Activated B cell treated with CpG ODN at 0.5 μM for 24 hours (primary cell): ENCODE measurements at regions of chr2 and their contacts with region 1.

Region 1: GRCh38 chr2:104447831-104448434 is 406.0 kb upstream of the POU3F3 start:
- DNase-seq: no peak
- ATAC-seq: no peak
- H3K4me3 Mint-ChIP-seq: no peak overlapping the region
- H3K27ac Mint-ChIP-seq: no peak overlapping the region
- H3K4me1 Mint-ChIP-seq: peaks cover 5% of the 10 kb centered on the region
- H3K27me3 Mint-ChIP-seq: no peaks in the 10 kb centered on the region
- CTCF ChIP-seq: no peak

Region 2: DNA sequence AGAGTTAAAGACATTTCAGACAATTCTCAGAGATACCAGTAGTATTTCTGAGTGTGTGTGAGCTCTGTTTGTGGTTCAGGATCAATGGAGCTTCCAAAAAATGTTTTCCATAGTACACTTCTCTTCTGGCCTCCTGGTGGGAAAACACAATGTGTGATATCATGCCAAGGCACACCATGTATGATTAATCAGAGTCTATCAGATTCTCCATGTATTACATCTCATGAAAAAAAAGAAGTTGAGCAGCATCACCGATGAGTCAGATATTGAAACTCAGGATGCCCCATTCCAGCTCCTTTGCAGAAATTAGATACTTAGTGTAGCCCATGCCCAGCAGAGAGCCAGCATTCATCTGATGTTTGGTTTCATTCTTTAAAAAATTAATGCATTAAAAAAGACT is 214.3 kb before region 1 on chr2:
- CTCF ChIA-PET with region 1: no interaction called
- POLR2A ChIA-PET with region 1: no interaction called
- intact Hi-C with region 1: no loop called
- DNase-seq: no peak
- ATAC-seq: no peak
- H3K4me3 Mint-ChIP-seq: no peak overlapping the region
- H3K27ac Mint-ChIP-seq: no peak overlapping the region
- H3K4me1 Mint-ChIP-seq: no peaks in the 10 kb centered on the region
- H3K27me3 Mint-ChIP-seq: no peaks in the 10 kb centered on the region
- CTCF ChIP-seq: no peak

Region 3: DNA sequence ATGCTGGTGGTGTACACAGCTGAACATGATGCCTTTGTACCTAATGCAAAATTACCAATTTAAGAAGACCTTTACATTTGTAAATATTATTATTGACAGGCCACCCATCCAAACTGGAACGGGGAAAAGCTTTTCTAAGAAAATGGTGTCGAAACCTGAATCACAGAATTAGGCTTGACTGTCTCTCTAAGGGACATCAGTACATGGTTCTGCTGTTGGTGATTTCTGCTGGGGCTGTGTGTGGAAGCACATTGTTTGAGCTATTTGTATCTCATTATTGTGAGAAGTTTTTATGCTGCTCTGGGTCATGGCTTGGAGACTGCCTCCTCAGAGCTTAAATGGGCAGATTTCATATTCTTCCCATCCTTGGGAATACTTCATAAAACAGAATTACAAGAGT is 14.9 kb before region 1 on chr2:
- CTCF ChIA-PET with region 1: no interaction called
- POLR2A ChIA-PET with region 1: interaction called, 11 read pairs
- intact Hi-C with region 1: no loop called
- DNase-seq: no peak
- ATAC-seq: no peak
- H3K4me3 Mint-ChIP-seq: no peak overlapping the region
- H3K27ac Mint-ChIP-seq: no peak overlapping the region
- H3K4me1 Mint-ChIP-seq: peaks cover 21% of the 10 kb centered on the region
- H3K27me3 Mint-ChIP-seq: peaks cover 14% of the 10 kb centered on the region
- CTCF ChIP-seq: no peak